ENCODE measurements at regions of chr12 and their contacts with region 1.

Region 1: DNA sequence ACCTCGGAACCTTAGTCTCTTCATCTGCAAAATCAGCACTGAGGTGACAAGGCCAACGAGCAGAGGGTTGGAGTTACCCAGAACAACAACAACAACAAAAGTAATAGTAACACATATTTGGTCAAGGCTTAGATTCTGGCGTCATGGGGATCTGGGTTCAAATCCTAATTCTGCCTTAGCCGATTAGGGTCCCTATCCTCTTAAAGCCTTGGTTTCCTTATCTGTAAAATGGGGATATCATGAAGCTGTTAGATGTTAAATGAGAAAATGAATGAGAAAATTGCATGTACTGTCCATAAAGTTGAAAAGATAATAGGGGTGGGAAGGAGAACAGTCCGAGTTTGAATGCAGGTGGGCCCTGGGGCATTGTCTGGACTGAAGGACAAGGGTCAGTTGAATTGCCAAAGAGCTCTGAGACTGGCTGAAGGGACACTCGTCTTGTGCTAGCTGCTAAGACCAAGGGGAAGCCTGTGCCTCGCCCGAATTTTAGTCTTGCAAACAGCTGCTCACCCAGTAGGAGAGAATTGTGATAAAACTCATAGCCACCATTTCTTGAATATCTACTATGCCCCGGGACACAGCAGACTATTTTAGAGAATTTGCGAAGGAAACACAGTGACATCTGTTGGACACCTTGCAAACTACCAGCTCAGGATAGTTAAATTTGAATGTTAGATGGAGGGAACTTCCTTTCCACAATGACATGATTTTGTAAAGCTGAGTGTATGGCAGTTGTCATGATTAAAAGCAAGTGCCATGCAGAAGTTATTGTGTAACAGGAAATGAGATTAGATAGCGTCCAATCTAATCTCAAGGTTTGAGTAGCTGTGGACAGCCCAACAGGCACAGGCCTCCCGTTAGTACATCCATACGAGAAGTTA is 6.8 kb upstream of the HNF1A start:
- DNase-seq: no peak
- ATAC-seq: peak; percentile 68 to 95
- H3K4me3 ChIP-seq: no peak overlapping the region
- H3K27ac ChIP-seq: no peak overlapping the region
- H3K4me1 ChIP-seq: no peaks in the 10 kb centered on the region
- H3K27me3 ChIP-seq: no peaks in the 10 kb centered on the region
- CTCF ChIP-seq: peak; percentile 65 to 75 (median 68)
- POLR2A ChIP-seq: no peak

Region 2: DNA sequence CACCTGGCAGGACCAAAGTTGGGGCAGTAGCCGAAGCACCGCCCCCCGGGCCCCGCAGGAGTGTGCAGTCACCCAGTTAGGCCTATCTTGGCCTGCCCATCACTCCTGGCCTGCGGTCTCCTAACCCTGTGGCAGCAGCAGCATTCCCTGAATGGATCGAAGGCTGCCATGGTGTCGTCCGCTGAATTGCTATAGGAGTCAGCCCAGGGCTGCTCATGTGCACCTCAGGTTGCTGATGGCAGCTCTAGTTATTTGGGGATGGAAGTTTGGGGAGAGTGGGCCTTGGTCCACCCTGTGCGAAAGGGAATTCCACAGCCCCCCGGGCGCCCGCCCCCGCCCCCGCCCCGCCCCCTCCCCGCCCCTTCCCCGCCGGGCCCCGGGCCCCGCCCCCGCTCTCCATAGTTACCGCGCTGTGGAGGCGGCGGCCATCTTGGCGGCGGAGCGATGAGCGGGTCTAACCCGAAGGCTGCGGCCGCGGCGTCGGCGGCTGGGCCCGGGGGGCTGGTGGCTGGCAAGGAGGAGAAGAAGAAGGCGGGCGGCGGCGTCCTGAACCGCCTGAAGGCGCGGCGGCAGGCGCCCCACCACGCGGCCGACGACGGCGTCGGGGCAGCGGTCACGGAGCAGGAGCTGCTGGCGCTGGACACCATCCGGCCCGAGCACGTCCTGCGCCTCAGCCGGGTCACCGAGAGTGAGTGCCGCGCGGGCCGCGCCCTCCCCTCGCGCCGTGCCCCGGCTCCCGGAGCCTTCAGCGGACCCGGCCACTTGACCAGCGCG is 261.3 kb before region 1 on chr12 and contains the start of gene UNC119B:
- in situ Hi-C with region 1: loop called in 1 of 4 experiments (anchors 10 kb)
- intact Hi-C with region 1: loop called (anchors 10 kb)
- DNase-seq: peak in 1 of 2 donors; percentile 42
- ATAC-seq: peak; percentile 79 to 81
- H3K4me3 ChIP-seq: peak within 1 kb of the TSS; percentile 63 to 87 (median 74)
- H3K27ac ChIP-seq: peak within 1 kb of the TSS; percentile 69 to 94 (median 85)
- H3K4me1 ChIP-seq: peaks cover 19 to 25% of the 10 kb centered on the region in 2 donors
- H3K27me3 ChIP-seq: no peaks in the 10 kb centered on the region
- CTCF ChIP-seq: peak in 1 of 5 experiments; percentile 24
- POLR2A ChIP-seq: peak; percentile 20 to 41
- total RNA-seq, gene UNC119B: 4.7 to 8.7 (median 7.8) TPM